ENCODE measurements at regions of chr12 and their contacts with region 1.

Region 1: GRCh38 chr12:3083921-3084347 is 6.8 kb downstream of the TSPAN9 start:
- DNase-seq: peak; percentile 41 to 65
- ATAC-seq: peak; percentile 69 to 92 (median 86)
- H3K4me3 ChIP-seq: peak overlapping the region in 3 of 10 donors; percentile 28 to 39 (median 30)
- H3K27ac ChIP-seq: peak overlapping the region; percentile 9 to 90 (median 80)
- H3K4me1 ChIP-seq: peaks cover 16 to 96% (median 77%) of the 10 kb centered on the region in 9 donors
- H3K27me3 ChIP-seq: peaks cover 0 to 2% (median 0%) of the 10 kb centered on the region in 7 donors
- CTCF ChIP-seq: no peak

Region 2: DNA sequence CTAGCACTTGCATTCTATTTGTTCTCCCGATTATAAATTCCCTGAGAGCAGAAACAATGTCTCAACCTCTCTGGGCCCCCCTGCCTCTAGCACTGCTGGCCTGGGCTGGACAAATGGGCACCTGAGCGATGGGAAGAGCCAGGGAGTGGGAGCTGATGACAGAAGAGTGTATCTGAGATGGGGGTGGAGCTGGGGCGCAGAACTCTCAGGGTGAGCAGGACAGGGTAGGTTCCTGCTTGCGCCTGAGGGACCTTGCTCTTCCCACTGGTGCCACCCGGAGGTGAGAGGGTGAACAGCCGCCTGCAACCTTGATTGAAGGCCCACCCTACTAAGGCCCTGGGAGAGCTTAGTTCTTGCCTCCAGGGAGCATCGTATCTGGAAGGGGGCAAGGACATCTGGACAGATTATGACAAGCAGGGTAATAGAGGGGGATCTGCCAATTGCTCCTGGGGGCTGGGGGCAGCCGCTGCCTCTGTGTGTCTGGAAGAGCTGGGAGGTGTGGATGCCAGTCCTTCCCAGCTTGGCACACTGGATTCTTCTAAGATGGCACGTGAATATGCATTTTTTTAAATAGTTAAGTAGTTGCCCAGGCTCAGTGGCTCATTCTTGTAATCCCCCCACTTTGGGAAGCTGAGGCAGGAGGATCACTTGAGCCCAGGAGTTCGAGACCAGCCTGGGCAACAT is 49.7 kb before region 1 on chr12:
- intact Hi-C with region 1: no loop called
- DNase-seq: peak; percentile 65 to 66
- ATAC-seq: peak; percentile 67 to 81 (median 74)
- H3K4me3 ChIP-seq: no peak overlapping the region
- H3K27ac ChIP-seq: no peak overlapping the region
- H3K4me1 ChIP-seq: peaks cover 0 to 53% (median 22%) of the 10 kb centered on the region in 9 donors
- H3K27me3 ChIP-seq: no peaks in the 10 kb centered on the region
- CTCF ChIP-seq: peak; percentile 49 to 79 (median 75)

Region 3: GRCh38 chr12:3122835-3123678 is 39.1 kb after region 1 on chr12:
- intact Hi-C with region 1: loop called in 7 of 10 experiments (anchors 2 to 5 kb)
- DNase-seq: peak; percentile 67 to 86
- ATAC-seq: peak; percentile 62 to 88 (median 76)
- H3K4me3 ChIP-seq: no peak overlapping the region
- H3K27ac ChIP-seq: peak overlapping the region; percentile 34 to 88 (median 76)
- H3K4me1 ChIP-seq: peaks cover 24 to 66% (median 58%) of the 10 kb centered on the region in 9 donors
- H3K27me3 ChIP-seq: peaks cover 0 to 18% (median 0%) of the 10 kb centered on the region in 7 donors
- CTCF ChIP-seq: peak; percentile 9 to 45 (median 21)

Region 4: GRCh38 chr12:3928540-3929184 is 844.7 kb after region 1 on chr12:
- intact Hi-C with region 1: no loop called
- DNase-seq: no peak
- ATAC-seq: peak in 1 of 8 donors; percentile 39
- H3K4me3 ChIP-seq: no peak overlapping the region
- H3K27ac ChIP-seq: no peak overlapping the region
- H3K4me1 ChIP-seq: no peaks in the 10 kb centered on the region
- H3K27me3 ChIP-seq: peaks cover 0 to 77% (median 70%) of the 10 kb centered on the region in 7 donors
- CTCF ChIP-seq: no peak

Measured in heart right ventricle (tissue), 16 donors.